ENCODE measurements at regions of chr14 and their contacts with region 1.

Region 1: DNA sequence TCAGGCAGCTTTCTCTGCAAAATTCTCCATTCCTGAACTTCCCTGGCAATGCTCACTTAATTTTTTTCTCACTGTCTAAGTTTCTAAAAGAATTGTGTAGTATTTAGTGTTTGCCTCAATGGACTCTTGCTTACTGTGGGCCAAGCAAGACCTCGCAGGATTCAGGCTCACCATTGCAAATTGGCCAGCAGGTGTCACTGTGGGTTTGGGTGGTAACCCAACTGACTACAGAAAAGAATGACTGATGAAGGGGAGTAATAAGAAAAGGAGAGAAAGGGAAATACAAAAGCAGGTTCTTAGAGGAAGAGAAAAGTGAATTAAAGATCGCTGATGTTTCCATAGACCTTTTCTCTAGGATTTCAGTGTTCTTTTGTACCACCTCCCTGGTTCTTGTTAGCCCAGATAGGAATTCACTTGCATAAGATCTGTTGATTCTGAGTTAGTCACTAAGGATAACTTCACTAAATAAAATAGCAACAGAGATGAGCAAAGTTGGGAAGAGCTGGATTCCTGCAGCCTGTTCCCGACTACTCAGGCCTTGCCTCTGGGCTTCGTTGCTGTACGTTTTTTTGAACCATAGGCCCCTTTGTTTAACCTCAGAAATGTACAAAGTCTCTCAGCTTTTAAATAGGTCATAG is 386.5 kb upstream of the DDHD1 start:
- DNase-seq: peak; percentile 81
- H3K4me3 Mint-ChIP-seq: no peak overlapping the region
- H3K27ac Mint-ChIP-seq: no peak overlapping the region
- H3K4me1 Mint-ChIP-seq: peaks cover 12% of the 10 kb centered on the region
- H3K27me3 Mint-ChIP-seq: no peaks in the 10 kb centered on the region
- CTCF ChIP-seq: peak; percentile 83

Region 2: GRCh38 chr14:53509276-53510244 is 30.0 kb before region 1 on chr14:
- CTCF ChIA-PET with region 1: interaction called, 13 read pairs
- POLR2A ChIA-PET with region 1: no interaction called
- intact Hi-C with region 1: no loop called
- DNase-seq: peak; percentile 93
- H3K4me3 Mint-ChIP-seq: peak overlapping the region; percentile 9
- H3K27ac Mint-ChIP-seq: peak overlapping the region; percentile 91
- H3K4me1 Mint-ChIP-seq: peaks cover 22% of the 10 kb centered on the region
- H3K27me3 Mint-ChIP-seq: no peaks in the 10 kb centered on the region
- CTCF ChIP-seq: no peak

Region 3: GRCh38 chr14:53549956-53550355 is 10.3 kb after region 1 on chr14:
- CTCF ChIA-PET with region 1: interaction called, 12 read pairs
- POLR2A ChIA-PET with region 1: no interaction called
- intact Hi-C with region 1: no loop called
- DNase-seq: no peak
- H3K4me3 Mint-ChIP-seq: no peak overlapping the region
- H3K27ac Mint-ChIP-seq: no peak overlapping the region
- H3K4me1 Mint-ChIP-seq: no peaks in the 10 kb centered on the region
- H3K27me3 Mint-ChIP-seq: no peaks in the 10 kb centered on the region
- CTCF ChIP-seq: no peak

Region 4: GRCh38 chr14:53953002-53953827 is 413.6 kb after region 1 on chr14:
- CTCF ChIA-PET with region 1: interaction called, 4 read pairs
- POLR2A ChIA-PET with region 1: no interaction called
- intact Hi-C with region 1: loop called (anchors 1 kb)
- DNase-seq: peak; percentile 75
- H3K4me3 Mint-ChIP-seq: peak overlapping the region; percentile 81
- H3K27ac Mint-ChIP-seq: peak overlapping the region; percentile 53
- H3K4me1 Mint-ChIP-seq: peaks cover 8% of the 10 kb centered on the region
- H3K27me3 Mint-ChIP-seq: no peaks in the 10 kb centered on the region
- CTCF ChIP-seq: no peak

Region 5: DNA sequence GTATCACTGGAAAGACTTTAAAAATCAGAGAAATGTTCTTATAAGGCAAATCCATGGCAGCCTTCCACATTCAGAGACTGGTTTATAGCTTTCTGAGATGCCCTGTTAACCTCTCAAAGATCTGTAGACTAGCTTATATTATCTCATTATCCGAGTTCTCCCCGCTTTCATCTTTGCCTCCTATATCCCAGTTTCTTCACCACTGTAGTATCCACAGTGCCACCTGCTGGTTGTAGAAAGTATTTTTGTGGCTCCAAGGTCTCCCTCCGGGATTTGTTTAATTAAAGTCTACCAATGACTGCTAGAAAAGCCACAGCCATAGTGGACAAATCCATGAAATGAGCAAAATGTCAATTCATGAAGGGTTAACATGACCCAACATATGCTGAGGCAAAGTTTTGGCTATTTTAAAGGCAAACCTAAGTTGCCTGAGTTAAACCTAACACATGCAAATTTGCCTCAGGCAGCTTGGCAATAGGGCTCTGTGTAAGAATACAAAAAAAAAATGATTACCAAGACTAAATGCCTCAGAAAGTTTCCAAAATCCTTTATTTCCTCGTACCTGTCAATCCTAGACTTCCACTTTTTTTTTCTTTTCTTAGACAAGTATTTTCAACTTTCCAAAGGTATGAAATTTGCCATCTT is 635.8 kb after region 1 on chr14:
- CTCF ChIA-PET with region 1: interaction called, 43 read pairs
- POLR2A ChIA-PET with region 1: interaction called, 6 read pairs
- intact Hi-C with region 1: loop called (anchors 1 kb)
- DNase-seq: peak; percentile 84
- H3K4me3 Mint-ChIP-seq: no peak overlapping the region
- H3K27ac Mint-ChIP-seq: no peak overlapping the region
- H3K4me1 Mint-ChIP-seq: peaks cover 30% of the 10 kb centered on the region
- H3K27me3 Mint-ChIP-seq: no peaks in the 10 kb centered on the region
- CTCF ChIP-seq: peak; percentile 80

Region 6: GRCh38 chr14:54338696-54339317 is 799.2 kb after region 1 on chr14:
- CTCF ChIA-PET with region 1: interaction called, 8 read pairs
- POLR2A ChIA-PET with region 1: no interaction called
- intact Hi-C with region 1: loop called (anchors 1 kb)
- DNase-seq: peak; percentile 67
- H3K4me3 Mint-ChIP-seq: no peak overlapping the region
- H3K27ac Mint-ChIP-seq: no peak overlapping the region
- H3K4me1 Mint-ChIP-seq: peaks cover 6% of the 10 kb centered on the region
- H3K27me3 Mint-ChIP-seq: no peaks in the 10 kb centered on the region
- CTCF ChIP-seq: peak; percentile 69

Measured in MCF 10A (cell line).